Activated naive CD4-positive, alpha-beta T cell treated with anti-CD3 and anti-CD28 coated beads for 36 hours (primary cell): ENCODE measurements at regions of chr6 and their contacts with region 1.

Region 1: GRCh38 chr6:90173262-90173925 is 123.2 kb downstream of the BACH2 start:
- DNase-seq: no peak
- H3K4me3 Mint-ChIP-seq: no peak overlapping the region
- H3K27ac Mint-ChIP-seq: peak overlapping the region; percentile 80
- H3K4me1 Mint-ChIP-seq: peaks cover 87% of the 10 kb centered on the region
- H3K27me3 Mint-ChIP-seq: no peaks in the 10 kb centered on the region

Region 2: DNA sequence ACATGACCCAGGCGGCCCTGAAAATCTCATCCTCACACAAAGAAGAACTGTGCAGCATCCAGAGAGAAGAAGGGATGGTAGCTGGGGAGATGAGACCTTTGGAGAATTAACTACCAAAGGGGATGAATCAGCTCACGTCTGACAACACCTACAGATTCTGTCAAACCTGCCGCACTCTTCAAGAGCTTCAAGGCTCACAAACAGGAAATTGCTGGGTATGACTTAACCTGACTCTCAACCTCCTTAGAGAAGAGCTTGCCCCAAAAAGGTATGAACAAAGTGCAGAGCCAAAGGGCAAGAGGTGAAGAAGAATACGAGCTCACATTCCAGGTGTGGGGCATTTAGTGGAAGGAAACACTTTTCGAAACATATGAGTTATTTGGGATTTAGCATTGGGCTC is 16.5 kb before region 1 on chr6:
- CTCF ChIA-PET with region 1: interaction called, 7 read pairs
- intact Hi-C with region 1: loop called (anchors 1 kb)
- DNase-seq: peak; percentile 75
- H3K4me3 Mint-ChIP-seq: peak overlapping the region; percentile 22
- H3K27ac Mint-ChIP-seq: peak overlapping the region; percentile 90
- H3K4me1 Mint-ChIP-seq: peaks cover 84% of the 10 kb centered on the region
- H3K27me3 Mint-ChIP-seq: no peaks in the 10 kb centered on the region

Region 3: DNA sequence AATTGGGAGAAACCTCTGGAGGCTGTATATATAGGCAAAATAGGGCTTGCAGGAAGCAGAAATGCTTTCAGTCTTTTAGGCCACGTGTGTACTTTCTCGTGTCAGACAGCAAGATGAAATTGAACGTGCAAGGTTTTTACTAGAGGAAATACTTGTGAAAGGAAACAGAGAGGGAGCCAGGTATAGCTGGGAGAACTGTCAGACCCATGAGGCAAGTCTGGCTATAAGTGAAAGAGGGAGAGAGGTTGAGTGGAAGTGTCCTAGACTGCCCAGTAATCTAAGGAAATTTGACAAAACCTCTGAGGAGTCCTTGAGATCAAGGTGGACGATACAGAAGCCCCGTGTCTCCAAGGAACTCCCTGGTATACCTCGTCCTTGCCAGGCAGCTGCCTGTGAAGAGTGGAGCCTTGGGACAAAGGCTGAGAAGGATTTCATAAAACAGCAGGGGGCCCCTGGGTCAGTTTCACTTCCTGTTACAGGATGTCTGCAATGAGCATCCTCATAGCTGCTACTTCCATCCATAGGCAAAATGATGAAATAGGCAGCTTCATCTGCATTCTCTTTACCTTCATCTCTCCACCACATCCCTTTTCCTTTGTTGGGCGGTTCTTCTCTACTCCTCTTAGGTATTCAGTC is 527.9 kb after region 1 on chr6:
- CTCF ChIA-PET with region 1: no interaction called
- intact Hi-C with region 1: no loop called
- DNase-seq: peak; percentile 37
- H3K4me3 Mint-ChIP-seq: no peak overlapping the region
- H3K27ac Mint-ChIP-seq: no peak overlapping the region
- H3K4me1 Mint-ChIP-seq: peaks cover 10% of the 10 kb centered on the region
- H3K27me3 Mint-ChIP-seq: peaks cover 8% of the 10 kb centered on the region

Region 4: GRCh38 chr6:92052513-92052912 is 1879.1 kb after region 1 on chr6:
- CTCF ChIA-PET with region 1: no interaction called
- intact Hi-C with region 1: no loop called
- DNase-seq: no peak
- H3K4me3 Mint-ChIP-seq: no peak overlapping the region
- H3K27ac Mint-ChIP-seq: no peak overlapping the region
- H3K4me1 Mint-ChIP-seq: no peaks in the 10 kb centered on the region
- H3K27me3 Mint-ChIP-seq: no peaks in the 10 kb centered on the region